ENCODE measurements at regions of chr10 and their contacts with region 1.

Region 1: DNA sequence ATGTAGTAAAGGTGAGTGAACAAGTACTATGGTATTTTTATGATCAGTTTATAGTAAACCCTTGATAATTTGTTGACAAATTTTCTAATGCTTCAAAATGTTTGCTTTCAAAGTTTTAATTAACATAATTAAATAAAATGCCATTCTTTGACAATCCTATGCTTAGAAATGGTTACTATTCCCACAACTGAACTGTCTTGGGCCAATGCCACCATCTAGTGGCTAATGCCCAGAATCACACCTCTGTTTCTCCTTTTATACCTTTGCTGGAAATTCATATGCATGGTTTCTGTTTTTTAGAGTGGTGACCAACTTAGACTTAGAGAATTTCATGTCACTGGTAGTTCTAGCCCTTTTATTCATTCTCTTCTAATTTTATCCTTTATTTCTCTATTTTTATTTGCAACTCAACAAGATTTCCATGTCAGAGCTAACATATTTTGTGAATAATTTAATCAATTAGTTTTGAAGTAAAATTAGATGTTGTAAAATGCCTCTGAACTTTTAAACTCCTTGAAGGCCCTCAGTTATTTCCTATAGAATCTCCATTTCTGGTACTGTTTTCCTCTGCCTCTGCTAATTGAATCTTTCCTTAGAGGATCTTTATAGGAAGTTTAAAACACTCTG is 31.1 kb downstream of the PCGF5 start:
- DNase-seq: peak in 2 of 4 donors; percentile 52 to 74
- ATAC-seq: peak; percentile 90
- H3K4me3 ChIP-seq: no peak overlapping the region
- H3K27ac ChIP-seq: no peak overlapping the region
- H3K4me1 ChIP-seq: no peaks in the 10 kb centered on the region
- H3K27me3 ChIP-seq: no peaks in the 10 kb centered on the region
- CTCF ChIP-seq: peak; percentile 83 to 85

Region 2: GRCh38 chr10:90905925-90906324 is 345.6 kb before region 1 on chr10:
- intact Hi-C with region 1: loop called (anchors 5 to 10 kb)
- DNase-seq: no peak
- ATAC-seq: no peak
- H3K4me3 ChIP-seq: no peak overlapping the region
- H3K27ac ChIP-seq: no peak overlapping the region
- H3K4me1 ChIP-seq: no peaks in the 10 kb centered on the region
- H3K27me3 ChIP-seq: no peaks in the 10 kb centered on the region
- CTCF ChIP-seq: no peak

Region 3: DNA sequence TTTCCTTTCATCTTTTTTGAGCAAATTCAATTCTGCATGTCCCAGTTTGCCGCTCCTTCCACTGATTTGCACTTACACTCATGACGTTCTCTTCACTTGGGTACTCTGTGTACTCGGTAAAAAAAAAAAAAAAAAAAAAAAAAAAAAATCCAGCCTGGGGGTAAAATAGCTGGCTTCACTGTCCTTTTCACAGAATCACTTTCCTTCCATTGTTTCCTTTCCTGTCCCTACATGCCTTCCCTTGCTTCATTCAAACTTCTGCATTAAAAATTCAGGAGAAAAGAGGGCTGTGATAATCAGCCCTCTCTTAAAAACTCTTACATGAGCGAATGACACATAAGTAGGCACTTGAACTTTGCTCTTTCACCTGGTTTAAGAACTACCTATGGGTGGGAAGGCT is 339.4 kb before region 1 on chr10:
- intact Hi-C with region 1: loop called (anchors 5 to 10 kb)
- DNase-seq: no peak
- ATAC-seq: no peak
- H3K4me3 ChIP-seq: no peak overlapping the region
- H3K27ac ChIP-seq: no peak overlapping the region
- H3K4me1 ChIP-seq: peaks cover 0 to 8% of the 10 kb centered on the region in 2 donors
- H3K27me3 ChIP-seq: no peaks in the 10 kb centered on the region
- CTCF ChIP-seq: no peak

Region 4: GRCh38 chr10:91006001-91006751 is 245.4 kb before region 1 on chr10:
- intact Hi-C with region 1: loop called in 1 of 2 experiments (anchors 10 kb)
- DNase-seq: peak in 2 of 4 donors; percentile 66 to 79
- ATAC-seq: peak; percentile 96
- H3K4me3 ChIP-seq: no peak overlapping the region
- H3K27ac ChIP-seq: peak overlapping the region in 1 of 2 donors; percentile 11
- H3K4me1 ChIP-seq: peaks cover 0 to 4% of the 10 kb centered on the region in 2 donors
- H3K27me3 ChIP-seq: no peaks in the 10 kb centered on the region
- CTCF ChIP-seq: peak; percentile 86 to 96

Measured in left lung (tissue), 14 donors.